CD8-positive, alpha-beta T cell (primary cell): ENCODE measurements at regions of chr3 and their contacts with region 1.

Region 1: GRCh38 chr3:45224824-45225464 is 1.1 kb downstream of the TMEM158 start:
- DNase-seq: peak in 4 of 9 experiments; percentile 9 to 50 (median 24)
- ATAC-seq: no peak
- H3K4me3 ChIP-seq: no peak overlapping the region
- H3K4me3 Mint-ChIP-seq: peak overlapping the region; percentile 80
- H3K27ac ChIP-seq: no peak overlapping the region
- H3K27ac Mint-ChIP-seq: no peak overlapping the region
- H3K4me1 ChIP-seq: peaks cover 8% of the 10 kb centered on the region
- H3K4me1 Mint-ChIP-seq: peaks cover 11% of the 10 kb centered on the region
- H3K27me3 ChIP-seq: peaks cover 22 to 28% of the 10 kb centered on the region in 2 experiments
- H3K27me3 Mint-ChIP-seq: peaks cover 64% of the 10 kb centered on the region
- CTCF ChIP-seq: no peak

Region 2: DNA sequence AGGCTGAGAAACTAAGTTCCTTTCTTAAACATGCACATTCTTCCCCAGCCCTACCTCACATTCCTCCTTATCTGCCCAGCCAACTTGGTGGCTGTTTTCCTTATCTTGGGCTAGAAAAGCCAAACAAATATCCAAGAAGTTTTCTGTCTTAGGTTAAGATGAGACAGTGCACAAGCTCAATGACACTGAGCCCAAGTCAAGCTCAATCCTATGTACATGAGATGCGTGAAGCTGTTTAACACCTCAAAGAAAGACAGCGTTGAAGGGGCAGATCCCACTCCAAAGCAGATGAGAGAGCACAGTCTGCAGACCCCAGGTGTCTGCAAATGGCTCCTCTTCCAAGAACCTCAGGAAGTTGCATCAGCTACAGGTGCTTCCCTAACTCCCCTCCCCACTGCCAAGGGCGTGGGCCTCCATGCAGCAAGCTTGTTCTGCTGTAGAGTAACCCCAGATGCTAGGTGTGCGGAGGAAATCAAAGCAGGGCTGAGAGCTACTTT is 1324.5 kb after region 1 on chr3:
- CTCF ChIA-PET with region 1: no interaction called
- POLR2A ChIA-PET with region 1: no interaction called
- intact Hi-C with region 1: loop called in 1 of 2 experiments (anchors 5 kb)
- DNase-seq: no peak
- ATAC-seq: no peak
- H3K4me3 ChIP-seq: no peak overlapping the region
- H3K4me3 Mint-ChIP-seq: no peak overlapping the region
- H3K27ac ChIP-seq: no peak overlapping the region
- H3K27ac Mint-ChIP-seq: no peak overlapping the region
- H3K4me1 ChIP-seq: peaks cover 5% of the 10 kb centered on the region
- H3K4me1 Mint-ChIP-seq: peaks cover 16% of the 10 kb centered on the region
- H3K27me3 ChIP-seq: peaks cover 0 to 2% of the 10 kb centered on the region in 2 experiments
- H3K27me3 Mint-ChIP-seq: no peaks in the 10 kb centered on the region
- CTCF ChIP-seq: no peak